ENCODE measurements at regions of chr10 and their contacts with region 1.

Region 1: GRCh38 chr10:13776861-13777311 is 190.1 kb downstream of the PRPF18 start:
- DNase-seq: no peak
- ATAC-seq: no peak

Region 2: DNA sequence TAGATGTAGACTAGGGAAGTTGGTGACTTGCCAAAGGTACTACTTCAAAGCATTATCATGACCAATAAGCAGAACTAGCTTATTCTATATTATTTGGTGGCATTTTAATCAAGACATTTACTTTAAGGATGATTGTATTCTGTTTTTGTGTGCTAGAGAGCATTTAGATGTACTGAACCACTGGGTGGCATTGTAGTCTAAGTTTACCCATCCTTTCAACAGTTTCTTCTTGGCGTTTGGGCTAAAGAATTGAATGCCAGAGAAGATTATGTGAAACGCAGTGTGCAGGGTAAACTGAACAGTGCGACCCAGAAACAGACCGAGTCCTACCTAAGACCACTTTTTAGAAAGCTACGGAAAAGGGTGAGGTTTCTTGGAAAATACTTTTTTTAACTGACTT is 163.4 kb before region 1 on chr10:
- intact Hi-C with region 1: loop called (anchors 5 kb)
- DNase-seq: no peak
- ATAC-seq: peak; percentile 86

Region 3: GRCh38 chr10:13659897-13660550 is 116.9 kb before region 1 on chr10:
- intact Hi-C with region 1: loop called (anchors 2 kb)
- DNase-seq: peak; percentile 81
- ATAC-seq: peak; percentile 72

Region 4: DNA sequence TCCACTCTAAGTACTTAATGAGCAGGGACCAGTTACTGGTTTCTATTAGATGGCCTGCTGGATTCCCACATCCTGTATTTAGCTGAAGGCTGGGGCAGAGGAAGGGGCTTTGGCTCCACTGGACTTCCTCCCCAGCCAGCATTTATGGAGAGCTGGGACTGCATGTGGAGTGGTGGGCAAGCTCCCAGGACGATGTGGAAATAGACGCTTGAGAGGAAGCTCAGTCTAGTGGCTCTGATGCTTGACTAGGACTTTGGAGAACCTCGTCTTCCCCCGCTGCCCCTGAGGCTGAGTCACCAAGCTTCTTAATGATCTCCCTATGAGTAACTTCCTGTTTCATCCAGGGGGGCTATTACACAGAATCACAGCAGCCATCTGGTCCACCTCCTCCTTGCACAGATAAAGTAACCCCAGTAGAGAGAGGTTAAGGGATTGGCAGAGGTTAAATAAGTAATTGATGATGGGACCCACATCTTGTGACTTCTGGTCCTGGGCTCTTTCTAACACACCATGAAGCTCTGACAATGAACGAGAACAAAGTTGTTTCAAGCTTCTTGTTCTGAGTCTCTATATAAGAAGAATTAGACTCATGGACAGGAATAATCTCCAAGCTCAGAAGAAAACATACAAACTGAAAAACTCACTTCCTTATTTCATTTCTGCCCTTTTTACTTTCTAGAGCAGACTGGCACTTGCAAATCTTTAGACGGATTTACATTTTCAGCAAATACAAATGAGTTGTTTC is 63.9 kb before region 1 on chr10:
- intact Hi-C with region 1: loop called (anchors 10 kb)
- DNase-seq: peak; percentile 86
- ATAC-seq: peak; percentile 72

Region 5: DNA sequence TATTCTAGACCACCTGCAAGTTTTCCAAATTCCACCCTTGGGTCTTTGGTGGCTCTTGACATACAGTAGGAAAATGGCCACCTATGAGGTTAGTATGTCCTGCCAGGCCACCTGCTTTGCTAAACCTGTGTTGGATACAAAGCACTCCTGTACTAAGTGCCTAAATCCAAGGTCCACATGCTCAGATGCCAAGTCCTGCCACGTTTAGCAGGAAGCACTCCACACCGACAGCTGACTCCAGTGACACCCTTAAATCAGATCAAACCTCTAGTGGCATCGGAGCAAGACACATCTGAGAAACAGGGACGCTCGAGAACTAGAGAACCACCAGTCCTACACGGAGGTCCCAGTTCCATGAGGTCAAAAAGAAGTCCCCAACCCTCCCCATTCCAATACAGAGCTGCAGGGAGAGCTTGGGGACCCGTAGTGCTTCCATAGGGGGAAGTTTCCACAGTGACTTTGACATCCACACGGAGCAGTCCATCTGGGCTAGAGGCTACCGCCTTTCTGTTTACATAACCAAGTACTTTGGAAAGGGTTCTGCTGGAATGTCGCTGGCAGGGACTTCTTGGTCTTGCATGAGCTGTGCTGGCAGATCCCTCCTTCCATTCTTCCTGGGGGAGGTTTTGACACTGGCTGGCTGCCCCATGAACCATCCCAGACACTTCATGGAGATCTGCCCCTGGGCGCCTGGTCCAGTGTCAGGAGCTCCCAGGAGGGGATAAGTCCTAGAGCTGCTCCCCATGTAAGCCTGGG is 100.4 kb after region 1 on chr10:
- intact Hi-C with region 1: no loop called
- DNase-seq: peak; percentile 87
- ATAC-seq: peak; percentile 87